ENCODE measurements at regions of chr3 and their contacts with region 1.

Region 1: GRCh38 chr3:151838583-151839312 is 24.8 kb downstream of the AADAC start:
- DNase-seq: peak in 1 of 2 donors; percentile 70
- ATAC-seq: peak in 7 of 8 donors; percentile 71 to 92 (median 87)
- H3K4me3 ChIP-seq: peak overlapping the region in 6 of 10 donors; percentile 3 to 40 (median 27)
- H3K27ac ChIP-seq: peak overlapping the region in 1 of 10 donors; percentile 8
- H3K4me1 ChIP-seq: peaks cover 0 to 18% (median 7%) of the 10 kb centered on the region in 9 donors
- H3K27me3 ChIP-seq: peaks cover 0 to 3% (median 0%) of the 10 kb centered on the region in 7 donors
- CTCF ChIP-seq: peak; percentile 60 to 95 (median 81)

Region 2: GRCh38 chr3:150733373-150733935 is 1105.3 kb before region 1 on chr3:
- intact Hi-C with region 1: no loop called
- DNase-seq: no peak
- ATAC-seq: peak in 5 of 8 donors; percentile 17 to 57 (median 34)
- H3K4me3 ChIP-seq: no peak overlapping the region
- H3K27ac ChIP-seq: peak overlapping the region in 4 of 10 donors; percentile 11 to 57 (median 27)
- H3K4me1 ChIP-seq: peaks cover 4 to 68% (median 40%) of the 10 kb centered on the region in 9 donors
- H3K27me3 ChIP-seq: no peaks in the 10 kb centered on the region
- CTCF ChIP-seq: no peak

Region 3: DNA sequence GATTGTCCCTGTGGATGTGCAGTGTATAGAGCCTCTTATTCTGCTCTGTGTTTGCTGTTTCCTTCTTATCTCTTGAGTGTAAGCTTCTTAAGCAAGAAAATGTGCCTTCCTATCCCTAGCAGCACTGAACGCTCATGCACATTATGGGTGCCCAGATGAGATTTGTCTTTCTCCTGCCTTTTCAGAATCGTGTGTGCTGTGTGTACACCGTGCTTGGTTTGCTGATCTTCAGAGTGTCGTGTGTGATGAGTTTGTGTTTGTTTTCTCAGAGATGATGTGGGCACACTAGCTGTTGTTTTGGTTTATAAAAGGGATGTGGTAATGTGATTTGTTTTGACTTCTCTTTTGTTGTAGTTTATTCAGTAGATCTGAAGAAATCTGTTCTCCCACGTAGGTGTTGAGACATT is 655.5 kb before region 1 on chr3:
- intact Hi-C with region 1: no loop called
- DNase-seq: no peak
- ATAC-seq: peak in 2 of 8 donors; percentile 14 to 27
- H3K4me3 ChIP-seq: no peak overlapping the region
- H3K27ac ChIP-seq: peak overlapping the region in 1 of 10 donors; percentile 46
- H3K4me1 ChIP-seq: peaks cover 0 to 11% (median 0%) of the 10 kb centered on the region in 9 donors
- H3K27me3 ChIP-seq: no peaks in the 10 kb centered on the region
- CTCF ChIP-seq: no peak

Region 4: DNA sequence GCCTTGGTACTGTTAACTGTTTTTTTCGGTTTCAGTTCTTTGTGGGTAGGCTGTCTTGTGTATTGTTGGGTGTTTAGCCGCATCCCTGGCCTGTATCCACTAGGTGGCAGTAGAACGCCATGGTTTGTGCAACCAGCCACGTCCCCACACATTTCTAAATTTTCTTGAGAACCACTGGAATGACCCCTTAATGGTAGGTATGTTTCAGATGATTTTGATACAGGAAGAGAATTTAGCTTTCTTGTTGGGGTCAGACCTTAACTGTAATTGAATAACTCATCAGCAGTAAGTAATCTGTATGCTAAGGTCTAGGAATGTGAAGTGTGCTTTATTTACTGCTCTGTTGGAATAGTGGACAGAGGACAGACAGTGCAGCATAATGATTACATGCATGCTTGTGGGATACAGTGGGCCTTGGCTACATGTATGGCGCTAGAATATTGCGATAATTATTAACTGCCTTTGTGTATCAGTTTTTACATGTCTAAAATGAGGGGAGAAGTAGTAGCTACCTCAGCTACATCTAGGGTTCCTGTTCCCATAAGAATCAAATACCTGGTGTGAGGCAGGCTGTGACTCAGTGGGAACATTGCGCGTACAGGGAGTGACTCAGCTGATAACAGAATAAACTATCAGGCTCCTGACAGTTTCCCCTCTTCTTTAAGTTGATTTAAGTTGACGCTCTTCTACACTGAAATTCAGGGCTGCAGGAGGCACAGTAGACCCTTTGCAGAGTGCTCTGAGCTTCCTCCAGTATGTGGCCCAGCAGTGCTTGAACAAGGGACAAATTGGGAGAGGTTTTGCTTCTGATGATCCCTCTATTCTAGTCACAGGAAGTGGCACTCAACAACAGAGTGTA is 610.7 kb before region 1 on chr3:
- intact Hi-C with region 1: loop called in 3 of 10 experiments (anchors 5 to 10 kb)
- DNase-seq: peak; percentile 53 to 81
- ATAC-seq: peak; percentile 74 to 91 (median 86)
- H3K4me3 ChIP-seq: no peak overlapping the region
- H3K27ac ChIP-seq: peak overlapping the region in 9 of 10 donors; percentile 31 to 75 (median 65)
- H3K4me1 ChIP-seq: peaks cover 0 to 52% (median 19%) of the 10 kb centered on the region in 9 donors
- H3K27me3 ChIP-seq: no peaks in the 10 kb centered on the region
- CTCF ChIP-seq: peak; percentile 80 to 96 (median 91)

Region 5: DNA sequence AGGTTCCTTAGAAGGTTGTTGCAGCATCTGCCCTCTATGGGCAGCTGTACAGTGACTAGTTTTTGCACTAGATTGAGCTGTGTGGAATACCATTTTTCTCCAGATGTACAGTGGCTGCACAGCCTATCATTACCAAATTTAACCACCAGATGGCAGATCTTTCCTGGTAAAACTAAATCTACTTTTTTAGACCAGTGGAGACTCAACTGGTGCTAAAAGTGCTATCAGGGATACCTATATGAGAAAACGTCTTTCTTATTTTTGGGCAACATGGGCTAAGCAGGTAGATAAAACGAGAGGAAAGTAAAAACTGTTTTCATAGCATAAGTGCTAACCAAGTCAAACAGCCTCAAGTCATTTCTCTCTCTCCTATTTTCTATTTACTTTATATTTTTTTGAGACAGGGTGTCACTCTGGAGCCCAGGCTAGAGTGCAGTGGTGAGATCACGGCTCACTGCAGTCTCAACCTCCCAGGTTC is 399.1 kb before region 1 on chr3:
- intact Hi-C with region 1: loop called (anchors 1 to 10 kb)
- DNase-seq: peak in 1 of 2 donors; percentile 28
- ATAC-seq: peak in 7 of 8 donors; percentile 52 to 87 (median 78)
- H3K4me3 ChIP-seq: no peak overlapping the region
- H3K27ac ChIP-seq: no peak overlapping the region
- H3K4me1 ChIP-seq: peaks cover 0 to under 1% (median 0%) of the 10 kb centered on the region in 9 donors
- H3K27me3 ChIP-seq: no peaks in the 10 kb centered on the region
- CTCF ChIP-seq: peak; percentile 65 to 86 (median 79)

Region 6: DNA sequence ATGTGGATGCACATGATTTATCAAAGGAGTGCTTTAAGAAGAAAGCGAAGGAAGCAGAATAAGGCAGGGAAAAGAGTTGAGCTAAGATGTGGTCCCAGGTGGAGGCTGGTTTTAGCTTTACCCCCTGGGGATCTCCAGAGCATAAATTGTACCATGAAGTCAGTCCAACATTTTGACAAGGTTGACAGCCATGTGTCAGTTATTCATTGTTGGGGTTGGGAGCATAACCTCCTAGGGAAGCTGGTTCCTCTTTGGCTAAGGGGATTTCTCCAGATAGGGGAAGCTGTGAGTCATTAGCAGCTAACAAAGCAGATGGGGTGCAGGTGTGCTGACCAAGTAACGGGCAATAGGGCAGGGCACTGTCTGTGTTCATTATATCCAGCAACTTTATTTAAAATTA is 254.2 kb before region 1 on chr3:
- intact Hi-C with region 1: no loop called
- DNase-seq: no peak
- ATAC-seq: no peak
- H3K4me3 ChIP-seq: no peak overlapping the region
- H3K27ac ChIP-seq: no peak overlapping the region
- H3K4me1 ChIP-seq: no peaks in the 10 kb centered on the region
- H3K27me3 ChIP-seq: no peaks in the 10 kb centered on the region
- CTCF ChIP-seq: no peak

Region 7: DNA sequence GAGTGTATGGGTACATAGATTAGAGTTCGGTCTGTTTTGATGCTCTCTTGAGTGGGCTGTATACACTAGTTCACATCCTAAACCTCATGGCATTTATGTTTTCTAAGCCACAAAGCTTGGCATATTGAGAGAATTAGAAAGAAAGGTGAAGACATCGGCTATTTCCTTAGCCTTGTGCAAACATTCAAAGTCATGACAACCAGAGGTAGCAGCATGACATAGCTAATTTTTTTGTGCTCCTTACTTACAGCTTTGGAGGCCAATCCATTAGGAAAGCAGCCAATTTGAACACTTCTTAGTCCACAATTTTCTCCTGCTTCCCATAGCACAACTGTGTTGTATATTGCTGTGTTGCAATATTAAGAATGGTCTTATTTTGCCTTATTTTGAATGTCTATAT is 46.3 kb before region 1 on chr3:
- intact Hi-C with region 1: loop called in 1 of 10 experiments (anchors 1 kb)
- DNase-seq: no peak
- ATAC-seq: no peak
- H3K4me3 ChIP-seq: no peak overlapping the region
- H3K27ac ChIP-seq: no peak overlapping the region
- H3K4me1 ChIP-seq: peaks cover 0 to 2% (median 0%) of the 10 kb centered on the region in 9 donors
- H3K27me3 ChIP-seq: no peaks in the 10 kb centered on the region
- CTCF ChIP-seq: no peak

Region 8: GRCh38 chr3:151918253-151919029 is 79.7 kb after region 1 on chr3:
- intact Hi-C with region 1: loop called in 4 of 10 experiments (anchors 5 to 10 kb)
- DNase-seq: no peak
- ATAC-seq: peak in 5 of 8 donors; percentile 39 to 65 (median 50)
- H3K4me3 ChIP-seq: no peak overlapping the region
- H3K27ac ChIP-seq: no peak overlapping the region
- H3K4me1 ChIP-seq: peaks cover 0 to under 1% (median 0%) of the 10 kb centered on the region in 9 donors
- H3K27me3 ChIP-seq: no peaks in the 10 kb centered on the region
- CTCF ChIP-seq: peak; percentile 33 to 78 (median 69)

Region 9: DNA sequence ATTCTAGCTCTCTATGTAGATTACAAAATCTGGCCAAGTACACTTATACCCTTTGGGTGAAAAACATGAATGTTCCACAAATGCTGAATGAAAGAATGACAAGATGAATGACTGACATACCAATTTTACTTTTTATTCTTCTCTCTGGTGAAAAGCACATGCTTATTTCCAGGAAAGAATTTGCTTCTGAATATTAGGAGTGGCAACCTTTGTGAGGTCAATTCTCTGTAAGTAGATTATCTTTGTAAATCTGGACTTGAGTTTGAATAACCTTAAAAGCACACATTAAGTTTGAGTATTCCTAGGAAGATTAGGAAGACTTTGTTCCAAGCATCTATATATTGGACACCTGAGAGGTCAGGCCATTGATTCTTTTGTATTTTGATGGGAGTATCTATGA is 918.1 kb after region 1 on chr3:
- intact Hi-C with region 1: no loop called
- DNase-seq: no peak
- ATAC-seq: no peak
- H3K4me3 ChIP-seq: no peak overlapping the region
- H3K27ac ChIP-seq: no peak overlapping the region
- H3K4me1 ChIP-seq: no peaks in the 10 kb centered on the region
- H3K27me3 ChIP-seq: no peaks in the 10 kb centered on the region
- CTCF ChIP-seq: no peak